Endothelial cell of umbilical vein (primary cell): ENCODE measurements at regions of chr17 and their contacts with region 1.

Region 1: GRCh38 chr17:59859444-59860025 is 33.2 kb downstream of the TUBD1 start:
- DNase-seq: peak; percentile 76
- H3K4me3 ChIP-seq: no peak overlapping the region
- H3K27ac ChIP-seq: no peak overlapping the region
- H3K4me1 ChIP-seq: peaks cover 14% of the 10 kb centered on the region
- H3K27me3 ChIP-seq: no peaks in the 10 kb centered on the region
- CTCF ChIP-seq: peak; percentile 29 to 45
- POLR2A ChIP-seq: no peak

Region 2: GRCh38 chr17:59521204-59522126 is 338.1 kb before region 1 on chr17:
- CTCF ChIA-PET with region 1: interaction called, 10 read pairs
- POLR2A ChIA-PET with region 1: no interaction called
- dilution Hi-C with region 1: no loop called
- intact Hi-C with region 1: no loop called
- DNase-seq: peak; percentile 72
- H3K4me3 ChIP-seq: no peak overlapping the region
- H3K27ac ChIP-seq: no peak overlapping the region
- H3K4me1 ChIP-seq: no peaks in the 10 kb centered on the region
- H3K27me3 ChIP-seq: peaks cover 2 to 7% of the 10 kb centered on the region in 2 experiments
- CTCF ChIP-seq: peak; percentile 75 to 79
- POLR2A ChIP-seq: no peak

Region 3: GRCh38 chr17:59734226-59734625 is 125.3 kb before region 1 on chr17:
- CTCF ChIA-PET with region 1: interaction called, 12 read pairs
- POLR2A ChIA-PET with region 1: no interaction called
- dilution Hi-C with region 1: no loop called
- intact Hi-C with region 1: no loop called
- DNase-seq: no peak
- H3K4me3 ChIP-seq: no peak overlapping the region
- H3K27ac ChIP-seq: no peak overlapping the region
- H3K4me1 ChIP-seq: peaks cover 4% of the 10 kb centered on the region
- H3K27me3 ChIP-seq: no peaks in the 10 kb centered on the region
- CTCF ChIP-seq: no peak
- POLR2A ChIP-seq: no peak

Region 4: DNA sequence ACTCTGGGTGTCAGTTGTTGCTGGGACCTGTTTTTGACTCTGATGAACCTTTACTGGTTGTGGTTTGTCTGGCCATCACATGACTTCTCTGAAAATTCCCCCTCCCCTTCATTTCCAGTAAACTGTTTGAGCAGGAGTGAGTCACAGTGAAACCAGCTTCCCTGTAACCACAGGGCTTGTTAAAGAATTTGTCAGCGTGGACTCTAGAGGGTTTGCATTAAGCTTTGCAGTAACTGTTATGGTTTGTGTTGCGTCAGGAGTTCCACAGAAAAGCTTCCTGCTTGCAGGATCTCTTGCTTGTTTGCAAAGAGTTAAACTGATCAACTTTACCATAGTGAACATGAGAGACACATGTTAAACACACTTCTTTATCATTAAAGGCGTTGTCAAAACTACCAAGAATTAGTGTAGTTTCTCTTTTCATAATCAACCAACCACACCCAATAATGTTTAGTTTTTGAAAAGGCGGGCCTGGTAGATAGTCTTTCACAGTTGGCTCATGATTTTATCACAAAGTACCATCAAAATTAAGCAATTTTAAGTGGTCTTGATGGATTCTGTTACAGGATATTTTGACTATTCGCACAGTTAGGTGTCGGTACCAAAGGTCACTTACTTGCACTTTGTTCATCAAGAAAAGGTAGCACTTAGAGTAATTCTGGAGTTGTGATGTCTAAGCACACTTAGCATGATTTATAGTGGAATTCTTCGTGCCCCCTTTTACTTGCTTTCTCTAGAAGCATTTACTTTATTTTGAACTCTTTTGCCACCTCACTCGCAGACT is 72.8 kb before region 1 on chr17:
- CTCF ChIA-PET with region 1: interaction called, 10 read pairs
- POLR2A ChIA-PET with region 1: no interaction called
- dilution Hi-C with region 1: no loop called
- intact Hi-C with region 1: no loop called
- DNase-seq: peak; percentile 98
- H3K4me3 ChIP-seq: peak overlapping the region in 1 of 3 experiments; percentile 25
- H3K27ac ChIP-seq: peak overlapping the region; percentile 98
- H3K4me1 ChIP-seq: peaks cover 61% of the 10 kb centered on the region
- H3K27me3 ChIP-seq: no peaks in the 10 kb centered on the region
- CTCF ChIP-seq: no peak
- POLR2A ChIP-seq: peak; percentile 53

Region 5: GRCh38 chr17:59846394-59847165 is 13.0 kb before region 1 on chr17:
- CTCF ChIA-PET with region 1: interaction called, 55 read pairs
- POLR2A ChIA-PET with region 1: interaction called, 4 read pairs
- dilution Hi-C with region 1: no loop called
- intact Hi-C with region 1: no loop called
- DNase-seq: peak; percentile 74
- H3K4me3 ChIP-seq: no peak overlapping the region
- H3K27ac ChIP-seq: peak overlapping the region; percentile 10
- H3K4me1 ChIP-seq: peaks cover 10% of the 10 kb centered on the region
- H3K27me3 ChIP-seq: no peaks in the 10 kb centered on the region
- CTCF ChIP-seq: no peak
- POLR2A ChIP-seq: no peak

Region 6: GRCh38 chr17:59964482-59965328 is 105.2 kb after region 1 on chr17 and contains the start of gene RNFT1:
- CTCF ChIA-PET with region 1: no interaction called
- POLR2A ChIA-PET with region 1: no interaction called
- dilution Hi-C with region 1: no loop called
- intact Hi-C with region 1: no loop called
- DNase-seq: peak; percentile 78
- H3K4me3 ChIP-seq: peak within 1 kb of the TSS; percentile 79 to 96 (median 88)
- H3K27ac ChIP-seq: peak within 1 kb of the TSS; percentile 70
- H3K4me1 ChIP-seq: peaks cover 9% of the 10 kb centered on the region
- H3K27me3 ChIP-seq: no peaks in the 10 kb centered on the region
- CTCF ChIP-seq: no peak
- POLR2A ChIP-seq: peak; percentile 86
- total RNA-seq, gene RNFT1: 16.2 and 16.6 TPM in 2 replicates